ENCODE measurements at regions of chr4 and their contacts with region 1.

Region 1: GRCh38 chr4:77358315-77358928 is 201.4 kb downstream of the CCNG2 start:
- DNase-seq: no peak
- H3K4me3 Mint-ChIP-seq: no peak overlapping the region
- H3K27ac Mint-ChIP-seq: no peak overlapping the region
- H3K4me1 Mint-ChIP-seq: no peaks in the 10 kb centered on the region
- H3K27me3 Mint-ChIP-seq: peaks cover 6% of the 10 kb centered on the region

Region 2: DNA sequence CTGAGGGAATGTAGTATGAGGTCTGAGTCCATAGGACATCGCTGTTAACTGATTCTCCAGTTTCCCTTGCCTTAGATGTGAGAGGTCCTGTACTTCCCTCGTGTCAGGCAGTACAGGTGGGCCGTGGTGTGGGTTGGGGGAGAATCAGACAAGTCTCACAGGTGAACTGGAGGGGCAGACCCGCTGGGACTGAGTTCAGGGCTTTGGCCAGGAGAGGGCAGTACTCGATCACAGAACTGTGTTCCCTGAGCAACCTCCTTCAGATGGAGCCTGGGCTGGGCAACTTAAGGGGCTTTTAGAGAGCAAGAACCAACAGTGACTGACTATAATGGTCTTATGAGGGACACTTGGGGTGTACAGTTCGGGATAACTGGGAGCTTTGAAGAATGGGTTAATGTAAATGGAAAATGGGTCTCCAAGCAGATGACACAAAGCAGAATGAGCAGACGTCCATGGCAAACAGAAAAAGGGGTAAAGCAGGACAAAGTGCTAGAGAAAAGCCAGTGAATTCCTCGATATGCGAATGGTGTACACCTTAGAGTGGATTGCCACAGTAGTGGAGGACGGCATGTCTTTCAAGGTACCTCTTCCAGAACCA is 117.9 kb before region 1 on chr4:
- CTCF ChIA-PET with region 1: interaction called, 34 read pairs
- POLR2A ChIA-PET with region 1: no interaction called
- DNase-seq: peak; percentile 66
- H3K4me3 Mint-ChIP-seq: no peak overlapping the region
- H3K27ac Mint-ChIP-seq: no peak overlapping the region
- H3K4me1 Mint-ChIP-seq: peaks cover 5% of the 10 kb centered on the region
- H3K27me3 Mint-ChIP-seq: peaks cover 20% of the 10 kb centered on the region